A549 (cell line): ENCODE measurements at regions of chr19 and their contacts with region 1.

Region 1: GRCh38 chr19:33771384-33772101 is 25.1 kb upstream of the KCTD15 start:
- DNase-seq: peak; percentile 80 to 94
- ATAC-seq: peak; percentile 54 to 91
- H3K4me3 ChIP-seq: no peak overlapping the region
- H3K27ac ChIP-seq: no peak overlapping the region
- H3K4me1 ChIP-seq: no peaks in the 10 kb centered on the region
- CTCF ChIP-seq: peak; percentile 98
- EP300 ChIP-seq: no peak
- POLR2A ChIP-seq: no peak
- RAD21 ChIP-seq: peak; percentile 99 to 100

Region 2: DNA sequence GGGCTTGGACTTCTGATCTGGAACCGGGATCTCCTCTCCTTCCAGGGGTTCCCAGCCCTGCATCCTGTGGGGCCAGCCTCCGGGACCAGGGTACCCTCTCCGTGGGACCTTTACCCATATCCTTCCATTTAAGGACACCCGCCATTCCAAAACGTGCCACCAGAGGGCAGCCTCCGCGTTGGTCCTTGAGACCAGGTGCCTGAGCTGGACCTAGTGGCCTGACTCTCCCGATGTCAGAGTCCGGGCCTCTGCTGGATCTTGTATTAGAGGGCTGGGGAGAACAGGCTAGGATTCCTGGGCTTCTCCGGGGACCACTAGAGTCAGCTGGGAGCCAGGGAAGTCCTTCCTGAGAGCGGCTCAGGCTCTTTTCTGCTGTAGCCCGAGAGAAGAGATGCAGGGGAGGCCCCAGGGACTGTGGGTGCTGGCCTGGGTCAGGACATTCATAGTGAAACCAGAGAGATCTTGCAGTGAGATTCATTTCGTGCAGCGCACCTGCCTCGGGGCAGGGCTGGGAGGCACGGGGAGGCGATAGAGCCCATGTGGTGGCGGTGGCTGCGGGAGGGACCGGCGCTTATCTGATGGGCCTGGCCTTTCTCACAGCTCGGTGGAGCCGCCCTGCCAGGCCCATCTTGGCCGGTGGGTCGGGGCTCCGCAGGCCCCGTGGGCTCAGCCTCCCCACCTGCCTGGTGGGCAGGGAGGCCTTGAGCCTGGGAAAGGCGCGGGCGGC is 536.1 kb before region 1 on chr19:
- CTCF ChIA-PET with region 1: interaction called, 48 read pairs
- POLR2A ChIA-PET with region 1: no interaction called
- DNase-seq: peak; percentile 88 to 98
- ATAC-seq: peak; percentile 66 to 90
- H3K4me3 ChIP-seq: no peak overlapping the region
- H3K27ac ChIP-seq: 0 out of 6 replicates have a peak overlapping the region, but pooled peaks of 1 of the 2 experiments have one; percentile 13
- H3K4me1 ChIP-seq: no peaks in the 10 kb centered on the region; the same call in 2 of the 3 replicates
- CTCF ChIP-seq: peak; percentile 99
- EP300 ChIP-seq: no peak
- POLR2A ChIP-seq: no peak
- RAD21 ChIP-seq: peak; percentile 94 to 95

Region 3: GRCh38 chr19:33430674-33431277 is 340.8 kb before region 1 on chr19:
- CTCF ChIA-PET with region 1: interaction called, 572 read pairs
- POLR2A ChIA-PET with region 1: interaction called, 4 read pairs
- DNase-seq: peak; percentile 80 to 93
- ATAC-seq: peak; percentile 90 to 98
- H3K4me3 ChIP-seq: no peak overlapping the region
- H3K27ac ChIP-seq: no peak overlapping the region
- H3K4me1 ChIP-seq: no peaks in the 10 kb centered on the region
- CTCF ChIP-seq: peak; percentile 98
- EP300 ChIP-seq: no peak
- POLR2A ChIP-seq: no peak
- RAD21 ChIP-seq: peak; percentile 90 to 95

Region 4: DNA sequence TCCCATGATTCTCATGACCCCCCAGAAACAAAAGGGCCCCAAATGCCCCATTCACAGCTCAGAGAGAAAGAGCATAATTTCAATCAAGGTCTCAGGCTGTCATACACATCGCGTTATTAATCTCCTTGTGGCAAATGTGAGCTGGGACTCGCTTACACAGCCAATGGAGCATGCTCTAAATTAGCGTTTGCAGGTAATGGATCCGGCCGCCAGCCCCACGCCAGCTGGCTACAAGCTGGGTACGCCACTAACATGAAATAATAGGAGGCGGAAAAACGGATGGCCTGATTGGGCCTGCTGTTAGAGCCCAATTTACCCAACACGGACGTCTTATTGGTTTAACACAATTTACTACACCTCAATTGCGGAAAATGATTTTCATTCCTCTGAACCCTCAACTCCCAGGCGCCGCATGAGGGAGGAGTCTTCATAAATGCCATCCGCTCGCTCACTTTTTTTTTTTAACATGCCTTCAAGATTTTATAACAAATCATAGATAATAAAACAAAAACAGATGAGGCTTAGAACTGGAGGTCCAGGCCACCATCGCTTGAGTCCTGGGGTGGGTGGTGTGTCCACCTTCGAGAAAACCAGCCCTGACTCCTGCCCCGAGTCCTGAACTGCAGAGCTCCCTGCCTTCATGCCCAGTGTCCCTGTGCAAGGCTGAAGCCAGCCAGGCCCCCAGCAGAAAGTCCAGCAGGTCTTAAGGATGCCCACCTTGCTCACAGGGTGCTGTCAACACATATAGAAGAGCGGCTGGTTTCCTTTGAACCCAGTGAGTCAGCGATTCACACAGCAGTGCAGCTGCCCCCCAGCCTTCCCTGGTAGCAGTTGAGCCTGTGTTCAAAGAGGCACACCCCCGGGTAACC is 312.1 kb before region 1 on chr19:
- CTCF ChIA-PET with region 1: interaction called, 10 read pairs
- POLR2A ChIA-PET with region 1: no interaction called
- DNase-seq: no peak
- ATAC-seq: no peak
- H3K4me3 ChIP-seq: no peak overlapping the region
- H3K27ac ChIP-seq: no peak overlapping the region
- H3K4me1 ChIP-seq: no peaks in the 10 kb centered on the region
- CTCF ChIP-seq: no peak
- EP300 ChIP-seq: no peak
- POLR2A ChIP-seq: no peak
- RAD21 ChIP-seq: no peak

Region 5: DNA sequence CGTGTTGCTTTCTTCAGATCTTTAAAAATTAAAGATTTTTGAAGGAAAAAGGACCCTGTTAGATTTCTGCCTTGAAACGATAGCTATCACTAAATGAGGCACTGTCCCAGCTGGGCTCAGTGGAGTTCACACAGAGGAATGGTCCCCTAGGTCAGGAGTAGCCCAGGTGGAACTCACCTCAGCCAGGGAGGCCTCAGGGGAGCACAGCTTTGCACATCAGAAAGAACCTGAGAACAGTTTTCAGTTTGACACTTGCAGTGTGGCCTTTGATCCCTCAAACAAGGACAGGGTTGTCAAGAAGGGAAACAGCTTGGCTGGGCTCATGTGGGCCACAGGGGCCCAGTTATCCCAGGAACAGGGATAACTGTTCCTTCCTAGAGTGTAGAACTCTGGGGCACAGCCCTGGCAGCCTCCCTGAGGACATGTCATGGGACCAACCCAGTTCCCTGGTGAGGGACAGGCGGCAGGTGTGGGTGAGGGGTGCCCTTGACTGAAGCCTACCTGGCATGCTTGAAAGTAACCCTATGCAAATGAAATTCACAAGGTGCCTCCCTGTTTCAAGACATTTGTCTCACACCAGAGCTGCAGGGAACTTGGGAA is 90.4 kb before region 1 on chr19:
- CTCF ChIA-PET with region 1: no interaction called
- POLR2A ChIA-PET with region 1: no interaction called
- DNase-seq: no peak
- ATAC-seq: no peak
- H3K4me3 ChIP-seq: no peak overlapping the region
- H3K27ac ChIP-seq: no peak overlapping the region
- H3K4me1 ChIP-seq: no peaks in the 10 kb centered on the region
- CTCF ChIP-seq: no peak
- EP300 ChIP-seq: no peak
- POLR2A ChIP-seq: no peak
- RAD21 ChIP-seq: no peak

Region 6: DNA sequence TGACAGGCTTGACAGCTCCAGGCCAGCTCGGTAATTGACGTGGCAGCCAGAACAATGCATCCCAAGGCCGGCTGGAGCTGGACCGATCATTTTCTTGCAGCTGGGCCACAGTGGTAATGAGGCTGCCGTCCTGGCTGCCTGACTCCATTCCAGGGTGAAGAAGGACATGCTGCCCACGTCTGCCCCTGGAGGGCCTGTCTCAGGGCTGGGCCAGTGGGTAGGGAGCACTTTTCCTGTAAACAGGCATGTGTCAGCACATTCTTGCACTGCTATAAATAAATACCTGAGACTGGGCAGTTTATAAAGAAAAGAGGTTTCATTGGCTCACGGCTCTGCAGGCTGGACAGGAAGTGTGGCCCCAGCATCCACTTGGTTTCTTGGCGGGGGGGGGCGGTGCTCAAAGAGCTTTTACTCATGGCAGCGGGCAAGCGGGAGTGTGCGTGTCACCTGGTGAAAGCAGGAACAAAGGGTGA is 13.0 kb before region 1 on chr19:
- CTCF ChIA-PET with region 1: interaction called, 147 read pairs
- POLR2A ChIA-PET with region 1: no interaction called
- DNase-seq: peak in 1 of 2 experiments; percentile 57
- ATAC-seq: peak; percentile 1 to 42; a peak in 3 of 6 replicates
- H3K4me3 ChIP-seq: no peak overlapping the region
- H3K27ac ChIP-seq: no peak overlapping the region
- H3K4me1 ChIP-seq: peaks cover 4% of the 10 kb centered on the region; the same call in 1 of the 3 replicates
- CTCF ChIP-seq: no peak
- EP300 ChIP-seq: no peak
- POLR2A ChIP-seq: no peak
- RAD21 ChIP-seq: no peak

Region 7: DNA sequence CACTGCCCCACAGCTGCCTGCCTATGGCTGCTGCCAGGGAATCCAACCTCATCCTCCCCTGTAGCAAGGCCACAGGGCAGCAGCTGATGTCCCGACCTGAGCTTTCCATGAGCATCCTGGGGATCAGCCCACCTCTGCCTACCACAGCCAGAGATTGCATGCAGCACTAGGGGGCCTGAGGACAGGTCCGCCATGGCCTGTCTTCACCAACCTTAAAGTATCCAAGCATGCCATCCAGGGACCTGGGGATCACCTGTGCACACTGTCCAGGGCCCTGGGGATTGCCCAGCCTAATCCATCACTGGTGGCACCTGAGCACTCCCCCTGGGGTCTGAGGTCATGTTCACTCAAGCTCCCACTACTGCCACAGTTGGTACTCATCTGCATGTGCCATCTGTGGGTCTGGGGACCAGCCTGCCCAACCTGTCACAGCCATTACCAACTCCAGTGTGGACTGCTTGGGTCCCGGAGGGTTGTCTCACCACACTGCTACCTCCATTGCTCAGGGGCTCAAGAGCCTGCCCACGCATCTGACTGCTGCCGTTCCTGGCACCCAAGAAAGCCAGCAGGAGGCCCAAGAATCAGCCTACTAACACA is 78.1 kb after region 1 on chr19:
- CTCF ChIA-PET with region 1: no interaction called
- POLR2A ChIA-PET with region 1: no interaction called
- DNase-seq: no peak
- ATAC-seq: peak in 1 of 2 experiments; percentile 64; a peak in 4 of 6 replicates
- H3K4me3 ChIP-seq: no peak overlapping the region
- H3K27ac ChIP-seq: no peak overlapping the region
- H3K4me1 ChIP-seq: no peaks in the 10 kb centered on the region
- CTCF ChIP-seq: no peak
- EP300 ChIP-seq: no peak
- POLR2A ChIP-seq: 0 out of 2 replicates have a peak, but pooled peaks have one; percentile 21
- RAD21 ChIP-seq: no peak

Region 8: GRCh38 chr19:33998739-33999345 is 227.3 kb after region 1 on chr19:
- CTCF ChIA-PET with region 1: interaction called, 13 read pairs
- POLR2A ChIA-PET with region 1: no interaction called
- DNase-seq: peak; percentile 16 to 44
- ATAC-seq: peak in 1 of 2 experiments; percentile 38; a peak in 1 of 6 replicates
- H3K4me3 ChIP-seq: peak overlapping the region; percentile 3; the same call in 2 of the 3 replicates
- H3K27ac ChIP-seq: no peak overlapping the region
- H3K4me1 ChIP-seq: peaks cover 10% of the 10 kb centered on the region; the same call in 2 of the 3 replicates
- CTCF ChIP-seq: peak; percentile 82
- EP300 ChIP-seq: no peak
- POLR2A ChIP-seq: no peak
- RAD21 ChIP-seq: peak; percentile 58 to 73